ENCODE measurements at regions of chr5 and their contacts with region 1.

Region 1: DNA sequence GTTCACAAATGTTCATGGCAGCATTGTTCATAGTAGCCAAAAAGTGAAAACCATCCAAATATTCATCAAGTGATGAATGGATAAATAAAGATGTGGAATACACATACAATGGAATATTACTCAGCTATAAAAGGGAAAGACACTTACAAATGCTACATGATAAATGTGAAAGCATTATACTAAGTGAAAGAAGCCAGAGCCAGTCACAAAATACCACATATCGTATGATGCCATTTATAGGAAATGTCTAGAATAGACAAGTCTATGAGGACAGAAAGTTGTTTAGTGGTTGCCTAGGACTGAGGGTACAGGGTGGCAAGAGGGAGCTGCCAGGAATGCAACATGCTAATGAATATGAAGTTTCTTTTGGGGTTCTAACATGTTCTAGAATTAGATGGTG is 148.7 kb downstream of the DEPDC1B start:
- DNase-seq: no peak
- H3K4me3 ChIP-seq: no peak overlapping the region
- H3K27ac ChIP-seq: peak overlapping the region; percentile 46 to 81 (median 74)
- H3K4me1 ChIP-seq: peaks cover 0 to 25% (median 19%) of the 10 kb centered on the region in 4 donors
- H3K27me3 ChIP-seq: no peaks in the 10 kb centered on the region
- CTCF ChIP-seq: no peak
- EP300 ChIP-seq: peak; percentile 81 to 95 (median 90)
- POLR2A ChIP-seq: no peak

Region 2: GRCh38 chr5:60339691-60340191 is 211.5 kb before region 1 on chr5:
- intact Hi-C with region 1: loop called (anchors 5 kb)
- DNase-seq: peak; percentile 72
- H3K4me3 ChIP-seq: no peak overlapping the region
- H3K27ac ChIP-seq: peak overlapping the region; percentile 35 to 75 (median 70)
- H3K4me1 ChIP-seq: peaks cover 0 to 45% (median 37%) of the 10 kb centered on the region in 4 donors
- H3K27me3 ChIP-seq: no peaks in the 10 kb centered on the region
- CTCF ChIP-seq: no peak
- EP300 ChIP-seq: no peak
- POLR2A ChIP-seq: no peak